Naive thymus-derived CD4-positive, alpha-beta T cell (primary cell): ENCODE measurements at regions of chr3 and their contacts with region 1.

Region 1: DNA sequence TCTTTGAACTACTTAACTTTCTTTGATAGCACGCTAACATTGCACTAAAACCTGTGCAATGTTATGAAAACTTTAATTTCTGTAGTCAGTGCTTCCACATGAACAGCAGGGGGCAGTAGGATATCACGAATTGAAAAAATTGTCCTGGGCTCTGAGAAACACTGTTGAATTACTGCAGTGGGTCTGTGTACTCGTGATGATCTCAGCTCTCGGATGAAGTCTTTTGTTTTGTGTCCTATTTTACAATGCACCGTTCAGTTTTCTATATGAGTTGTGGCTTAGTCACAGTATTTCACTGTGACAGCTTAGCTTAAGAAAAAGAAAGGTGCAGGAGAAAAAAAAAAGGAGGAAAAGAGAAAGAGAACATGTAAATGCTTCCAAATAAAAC is 141.3 kb upstream of the CCDC54 start:
- DNase-seq: peak in 7 of 9 donors; percentile 43 to 78 (median 73)
- ATAC-seq: peak; percentile 84
- H3K4me3 ChIP-seq: peak overlapping the region; percentile 42
- H3K4me3 Mint-ChIP-seq: peak overlapping the region in 9 of 10 donors; percentile 40 to 80 (median 61)
- H3K27ac ChIP-seq: no peak overlapping the region
- H3K27ac Mint-ChIP-seq: peak overlapping the region in 1 of 9 donors; percentile 33
- H3K4me1 ChIP-seq: peaks cover 0 to 2% of the 10 kb centered on the region in 2 donors
- H3K4me1 Mint-ChIP-seq: peaks cover 2 to 17% (median 12%) of the 10 kb centered on the region in 7 donors
- H3K27me3 ChIP-seq: no peaks in the 10 kb centered on the region
- H3K27me3 Mint-ChIP-seq: peaks cover 0 to 35% (median 10%) of the 10 kb centered on the region in 5 donors

Region 2: GRCh38 chr3:105366326-105367062 is 1869.4 kb before region 1 on chr3 and contains the start of gene ALCAM:
- CTCF ChIA-PET with region 1: no interaction called
- POLR2A ChIA-PET with region 1: no interaction called
- intact Hi-C with region 1: loop called (anchors 5 to 10 kb)
- DNase-seq: peak; percentile 66 to 85 (median 73)
- ATAC-seq: peak; percentile 72
- H3K4me3 ChIP-seq: peak within 1 kb of the TSS; percentile 81
- H3K4me3 Mint-ChIP-seq: peak within 1 kb of the TSS; percentile 90 to 97 (median 92)
- H3K27ac ChIP-seq: peak within 1 kb of the TSS; percentile 70
- H3K27ac Mint-ChIP-seq: peak within 1 kb of the TSS; percentile 82 to 99 (median 94)
- H3K4me1 ChIP-seq: peaks cover 3 to 10% of the 10 kb centered on the region in 2 donors
- H3K4me1 Mint-ChIP-seq: peaks cover 22 to 40% (median 29%) of the 10 kb centered on the region in 7 donors
- H3K27me3 ChIP-seq: no peaks in the 10 kb centered on the region
- H3K27me3 Mint-ChIP-seq: peaks cover 14 to 32% (median 24%) of the 10 kb centered on the region in 5 donors
- total RNA-seq, gene ALCAM: 3.4 to 10.3 (median 4.4) TPM

Region 3: GRCh38 chr3:106985721-106986120 is 250.2 kb before region 1 on chr3:
- CTCF ChIA-PET with region 1: no interaction called
- POLR2A ChIA-PET with region 1: no interaction called
- intact Hi-C with region 1: no loop called
- DNase-seq: no peak
- ATAC-seq: no peak
- H3K4me3 ChIP-seq: no peak overlapping the region
- H3K4me3 Mint-ChIP-seq: no peak overlapping the region
- H3K27ac ChIP-seq: no peak overlapping the region
- H3K27ac Mint-ChIP-seq: no peak overlapping the region
- H3K4me1 ChIP-seq: no peaks in the 10 kb centered on the region
- H3K4me1 Mint-ChIP-seq: no peaks in the 10 kb centered on the region
- H3K27me3 ChIP-seq: no peaks in the 10 kb centered on the region
- H3K27me3 Mint-ChIP-seq: peaks cover 0 to 5% (median 0%) of the 10 kb centered on the region in 5 donors

Region 4: DNA sequence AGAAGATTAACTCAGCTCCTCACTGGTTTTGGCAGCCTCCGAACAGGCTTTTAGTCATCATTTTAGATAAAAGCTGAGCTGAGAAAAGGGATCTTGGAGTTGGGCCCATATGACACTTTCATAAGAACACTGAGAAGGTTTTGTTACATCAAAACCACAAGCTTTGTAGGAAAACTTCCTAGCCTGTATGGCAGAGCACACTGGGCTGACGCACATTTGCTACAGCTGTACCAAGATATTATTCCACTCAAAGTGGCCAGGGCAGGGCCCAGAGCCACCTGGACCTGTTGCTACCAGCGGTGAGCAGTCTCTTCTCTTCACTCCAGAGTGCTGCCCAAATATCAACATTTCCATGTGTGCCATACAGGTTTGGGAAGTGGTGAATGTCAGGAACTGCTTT is 19.2 kb before region 1 on chr3:
- CTCF ChIA-PET with region 1: no interaction called
- POLR2A ChIA-PET with region 1: no interaction called
- intact Hi-C with region 1: no loop called
- DNase-seq: no peak
- ATAC-seq: no peak
- H3K4me3 ChIP-seq: no peak overlapping the region
- H3K4me3 Mint-ChIP-seq: no peak overlapping the region
- H3K27ac ChIP-seq: no peak overlapping the region
- H3K27ac Mint-ChIP-seq: no peak overlapping the region
- H3K4me1 ChIP-seq: no peaks in the 10 kb centered on the region
- H3K4me1 Mint-ChIP-seq: peaks cover 0 to 3% (median 0%) of the 10 kb centered on the region in 7 donors
- H3K27me3 ChIP-seq: no peaks in the 10 kb centered on the region
- H3K27me3 Mint-ChIP-seq: peaks cover 0 to 28% (median 5%) of the 10 kb centered on the region in 5 donors

Region 5: GRCh38 chr3:107347751-107348150 is 111.8 kb after region 1 on chr3:
- CTCF ChIA-PET with region 1: no interaction called
- POLR2A ChIA-PET with region 1: no interaction called
- intact Hi-C with region 1: no loop called
- DNase-seq: no peak
- ATAC-seq: no peak
- H3K4me3 ChIP-seq: no peak overlapping the region
- H3K4me3 Mint-ChIP-seq: no peak overlapping the region
- H3K27ac ChIP-seq: no peak overlapping the region
- H3K27ac Mint-ChIP-seq: no peak overlapping the region
- H3K4me1 ChIP-seq: no peaks in the 10 kb centered on the region
- H3K4me1 Mint-ChIP-seq: peaks cover 0 to 9% (median 0%) of the 10 kb centered on the region in 7 donors
- H3K27me3 ChIP-seq: no peaks in the 10 kb centered on the region
- H3K27me3 Mint-ChIP-seq: peaks cover 0 to 6% (median 0%) of the 10 kb centered on the region in 5 donors

Region 6: DNA sequence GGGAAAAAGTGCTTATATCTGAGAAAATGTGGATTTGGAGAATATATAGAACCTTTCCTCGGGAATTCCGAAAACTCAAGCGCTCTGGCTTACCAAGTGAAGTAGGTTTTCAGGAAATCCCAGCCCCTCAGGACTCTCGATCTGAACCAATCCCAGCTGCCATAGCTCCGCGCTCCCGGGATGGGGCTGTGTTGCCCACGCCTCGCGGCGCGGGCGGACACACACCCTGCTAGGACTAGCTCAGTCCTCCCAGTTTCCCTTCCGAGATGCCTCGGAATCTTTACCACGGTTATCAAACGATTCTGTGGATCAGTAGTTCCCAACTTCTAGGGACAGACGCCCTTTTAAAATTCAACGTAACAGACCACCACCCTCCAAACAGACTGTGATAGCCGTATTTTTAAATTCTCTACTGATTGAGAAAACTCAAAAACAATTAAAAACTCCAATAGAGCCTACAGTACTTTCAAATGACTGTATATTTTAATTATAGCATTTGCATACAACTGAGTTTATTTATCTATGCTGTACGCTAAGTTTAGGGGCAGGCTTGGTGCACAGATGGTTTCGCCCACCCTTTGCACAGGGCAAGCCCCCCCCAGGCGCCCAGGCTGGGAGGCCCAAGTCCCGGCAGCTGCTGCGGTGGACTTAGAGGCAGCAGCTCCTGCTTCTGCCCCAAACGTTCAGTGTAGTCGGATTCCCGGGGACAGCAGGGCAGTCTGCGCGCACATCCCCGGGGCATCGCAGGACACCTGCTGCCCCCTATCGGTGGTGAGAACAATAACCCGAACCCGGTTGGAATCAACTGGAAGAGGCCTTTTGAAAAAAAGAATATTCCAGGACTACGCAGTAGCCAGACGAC is 193.6 kb after region 1 on chr3:
- CTCF ChIA-PET with region 1: interaction called, 5 read pairs
- POLR2A ChIA-PET with region 1: no interaction called
- intact Hi-C with region 1: loop called in 1 of 2 experiments (anchors 1 kb)
- DNase-seq: peak; percentile 33 to 72 (median 61)
- ATAC-seq: peak; percentile 77
- H3K4me3 ChIP-seq: peak overlapping the region; percentile 76
- H3K4me3 Mint-ChIP-seq: peak overlapping the region; percentile 81 to 95 (median 90)
- H3K27ac ChIP-seq: no peak overlapping the region
- H3K27ac Mint-ChIP-seq: peak overlapping the region in 3 of 9 donors; percentile 25 to 80 (median 38)
- H3K4me1 ChIP-seq: peaks cover 11 to 12% of the 10 kb centered on the region in 2 donors
- H3K4me1 Mint-ChIP-seq: peaks cover 0 to 27% (median 13%) of the 10 kb centered on the region in 7 donors
- H3K27me3 ChIP-seq: no peaks in the 10 kb centered on the region
- H3K27me3 Mint-ChIP-seq: peaks cover 0 to 61% (median 0%) of the 10 kb centered on the region in 5 donors

Region 7: DNA sequence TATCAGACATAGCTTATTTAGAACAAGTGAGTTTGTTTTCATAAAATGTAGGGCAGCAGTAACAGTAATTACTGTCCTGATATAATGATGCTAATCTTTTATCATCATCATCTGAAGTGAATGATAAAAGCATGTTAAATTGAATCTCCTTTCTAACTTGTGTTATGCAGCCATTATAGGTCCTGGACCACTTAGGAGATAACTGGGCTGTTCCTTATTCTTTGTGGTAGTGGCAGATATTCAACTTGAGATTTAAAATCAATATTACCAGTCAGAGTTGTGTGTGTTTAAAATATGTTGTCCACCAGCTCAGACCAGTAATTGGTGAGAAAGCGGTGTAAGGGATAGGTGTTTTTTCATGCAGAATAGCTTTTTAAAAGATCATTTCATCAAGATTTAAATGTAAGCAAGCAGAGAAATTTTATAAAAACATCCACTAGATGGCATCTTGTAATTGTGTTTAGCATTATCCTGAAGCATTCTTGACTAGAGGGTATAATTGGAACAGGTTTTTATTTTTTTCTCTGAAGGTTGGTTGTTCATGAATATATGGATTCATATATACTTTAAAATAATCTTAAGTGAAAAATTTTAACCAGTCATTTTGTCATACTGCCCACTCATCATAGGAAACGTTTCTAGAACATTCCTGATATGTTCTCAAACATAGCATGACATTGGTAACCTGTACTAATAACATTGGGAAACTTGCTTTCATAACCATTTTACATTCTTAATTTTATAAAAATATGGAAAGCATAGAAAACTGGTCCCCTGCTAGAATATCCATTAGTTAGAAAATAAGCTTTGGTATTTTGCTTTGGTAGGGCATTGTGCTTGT is 440.8 kb after region 1 on chr3:
- CTCF ChIA-PET with region 1: interaction called, 5 read pairs
- POLR2A ChIA-PET with region 1: no interaction called
- intact Hi-C with region 1: loop called in 1 of 2 experiments (anchors 5 kb)
- DNase-seq: peak in 4 of 9 donors; percentile 10 to 52 (median 44)
- ATAC-seq: peak; percentile 49
- H3K4me3 ChIP-seq: no peak overlapping the region
- H3K4me3 Mint-ChIP-seq: no peak overlapping the region
- H3K27ac ChIP-seq: no peak overlapping the region
- H3K27ac Mint-ChIP-seq: peak overlapping the region in 4 of 9 donors; percentile 19 to 79 (median 53)
- H3K4me1 ChIP-seq: no peaks in the 10 kb centered on the region
- H3K4me1 Mint-ChIP-seq: peaks cover 21 to 56% (median 48%) of the 10 kb centered on the region in 7 donors
- H3K27me3 ChIP-seq: no peaks in the 10 kb centered on the region
- H3K27me3 Mint-ChIP-seq: peaks cover 0 to 2% (median 0%) of the 10 kb centered on the region in 5 donors

Region 8: DNA sequence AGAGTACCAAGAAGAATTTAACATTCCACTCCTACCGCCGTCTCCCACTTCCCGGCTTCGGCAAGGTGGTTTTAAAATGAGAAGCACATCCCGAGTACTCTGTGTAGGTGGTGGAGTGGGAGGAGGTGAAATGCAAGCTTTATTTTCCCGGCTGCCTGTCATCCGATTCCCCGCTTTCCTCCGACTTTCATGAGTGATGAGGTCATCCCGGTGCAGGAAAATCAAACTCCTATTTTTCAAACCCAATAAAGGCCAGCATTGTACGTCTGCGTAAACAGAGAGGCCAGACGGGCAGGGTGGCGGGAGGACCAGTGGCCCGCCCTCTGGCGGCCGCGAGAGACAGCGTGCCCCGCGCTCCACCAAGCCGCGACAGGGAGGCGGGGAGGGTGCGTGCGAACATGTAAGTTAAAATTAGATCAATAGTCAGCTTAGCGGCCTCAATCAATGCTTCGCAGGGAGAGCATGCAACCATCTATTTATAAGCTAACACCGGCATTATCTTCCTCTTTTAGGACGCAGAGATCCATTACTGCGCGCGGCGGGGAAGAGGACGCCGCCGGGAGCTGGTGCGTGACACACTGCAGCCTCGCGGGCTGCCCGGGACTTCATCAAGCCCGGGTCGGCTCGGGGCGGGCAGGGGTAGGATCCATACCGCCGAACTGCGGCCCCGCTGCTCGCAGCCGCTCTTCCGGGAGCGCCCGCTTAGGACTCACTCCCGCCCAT is 691.6 kb after region 1 on chr3:
- CTCF ChIA-PET with region 1: interaction called, 6 read pairs
- POLR2A ChIA-PET with region 1: no interaction called
- intact Hi-C with region 1: loop called (anchors 1 to 2 kb)
- DNase-seq: peak; percentile 39 to 71 (median 57)
- ATAC-seq: peak; percentile 92
- H3K4me3 ChIP-seq: peak overlapping the region; percentile 60
- H3K4me3 Mint-ChIP-seq: peak overlapping the region; percentile 86 to 93 (median 89)
- H3K27ac ChIP-seq: no peak overlapping the region
- H3K27ac Mint-ChIP-seq: peak overlapping the region in 5 of 9 donors; percentile 26 to 88 (median 64)
- H3K4me1 ChIP-seq: peaks cover 5 to 6% of the 10 kb centered on the region in 2 donors
- H3K4me1 Mint-ChIP-seq: peaks cover 9 to 15% (median 13%) of the 10 kb centered on the region in 7 donors
- H3K27me3 ChIP-seq: peaks cover 0 to under 1% of the 10 kb centered on the region in 2 donors
- H3K27me3 Mint-ChIP-seq: peaks cover 0 to 17% (median 4%) of the 10 kb centered on the region in 5 donors

Region 9: DNA sequence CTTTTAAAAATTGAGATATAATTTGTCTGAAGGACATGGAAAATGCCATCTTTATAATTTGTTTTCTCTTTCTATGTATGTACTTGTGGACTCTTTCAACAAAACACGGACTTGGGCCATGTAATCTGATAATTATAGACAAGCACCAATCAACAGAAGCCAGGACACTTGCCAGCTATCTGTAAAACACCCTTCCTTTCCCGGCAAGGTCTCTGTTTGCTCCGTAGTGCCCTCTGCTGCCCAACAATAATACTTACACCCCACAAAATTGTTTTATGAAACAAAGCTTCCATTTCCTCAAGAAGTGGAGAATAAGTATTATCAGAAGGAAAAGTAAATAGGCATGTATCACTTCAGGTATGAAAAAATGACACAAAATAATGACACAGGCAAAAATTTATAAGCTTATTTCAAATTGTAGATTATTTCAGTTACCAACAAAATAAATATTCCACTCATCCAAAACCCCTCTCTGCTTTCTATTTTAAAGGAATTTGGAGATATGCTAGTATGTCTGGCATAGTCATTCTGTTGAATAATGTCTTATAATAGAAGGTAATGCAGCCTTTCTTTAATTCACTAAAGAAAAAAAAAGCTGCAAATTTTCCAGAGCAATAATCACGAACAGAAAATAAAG is 1241.7 kb after region 1 on chr3:
- CTCF ChIA-PET with region 1: interaction called, 6 read pairs
- POLR2A ChIA-PET with region 1: no interaction called
- intact Hi-C with region 1: loop called in 1 of 2 experiments (anchors 1 kb)
- DNase-seq: peak; percentile 17 to 65 (median 51)
- ATAC-seq: peak; percentile 91
- H3K4me3 ChIP-seq: no peak overlapping the region
- H3K4me3 Mint-ChIP-seq: no peak overlapping the region
- H3K27ac ChIP-seq: no peak overlapping the region
- H3K27ac Mint-ChIP-seq: no peak overlapping the region
- H3K4me1 ChIP-seq: no peaks in the 10 kb centered on the region
- H3K4me1 Mint-ChIP-seq: peaks cover 0 to 7% (median 0%) of the 10 kb centered on the region in 7 donors
- H3K27me3 ChIP-seq: no peaks in the 10 kb centered on the region
- H3K27me3 Mint-ChIP-seq: peaks cover 0 to 17% (median 3%) of the 10 kb centered on the region in 5 donors